IMR-90 (cell line): ENCODE measurements at regions of chr9 and their contacts with region 1.

Region 1: DNA sequence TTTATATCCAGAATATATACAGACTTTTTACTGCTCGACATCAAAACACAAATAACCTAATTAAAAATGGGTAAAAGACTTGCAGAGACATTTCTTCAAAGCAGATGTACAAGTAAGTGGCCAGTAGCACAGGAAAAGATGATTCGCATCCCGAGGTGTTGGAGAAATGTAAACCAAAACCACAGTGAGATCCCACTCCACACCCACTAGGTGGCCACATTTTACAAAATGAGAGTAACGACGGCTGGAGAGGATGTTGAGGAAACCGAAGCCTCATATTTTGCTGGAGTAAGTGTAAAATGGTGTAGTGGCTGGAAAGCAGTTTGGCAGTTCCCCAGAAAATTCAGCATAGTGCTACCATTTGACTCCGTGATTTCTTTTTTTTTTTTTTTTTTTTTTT is 21.2 kb upstream of the GBGT1 start:
- DNase-seq: peak; percentile 62
- ATAC-seq: peak; percentile 79
- H3K4me3 ChIP-seq: no peak overlapping the region
- H3K27ac ChIP-seq: no peak overlapping the region
- H3K4me1 ChIP-seq: no peaks in the 10 kb centered on the region
- H3K27me3 ChIP-seq: peaks cover 45% of the 10 kb centered on the region
- CTCF ChIP-seq: peak; percentile 61
- POLR2A ChIP-seq: no peak
- RAD21 ChIP-seq: peak; percentile 42

Region 2: DNA sequence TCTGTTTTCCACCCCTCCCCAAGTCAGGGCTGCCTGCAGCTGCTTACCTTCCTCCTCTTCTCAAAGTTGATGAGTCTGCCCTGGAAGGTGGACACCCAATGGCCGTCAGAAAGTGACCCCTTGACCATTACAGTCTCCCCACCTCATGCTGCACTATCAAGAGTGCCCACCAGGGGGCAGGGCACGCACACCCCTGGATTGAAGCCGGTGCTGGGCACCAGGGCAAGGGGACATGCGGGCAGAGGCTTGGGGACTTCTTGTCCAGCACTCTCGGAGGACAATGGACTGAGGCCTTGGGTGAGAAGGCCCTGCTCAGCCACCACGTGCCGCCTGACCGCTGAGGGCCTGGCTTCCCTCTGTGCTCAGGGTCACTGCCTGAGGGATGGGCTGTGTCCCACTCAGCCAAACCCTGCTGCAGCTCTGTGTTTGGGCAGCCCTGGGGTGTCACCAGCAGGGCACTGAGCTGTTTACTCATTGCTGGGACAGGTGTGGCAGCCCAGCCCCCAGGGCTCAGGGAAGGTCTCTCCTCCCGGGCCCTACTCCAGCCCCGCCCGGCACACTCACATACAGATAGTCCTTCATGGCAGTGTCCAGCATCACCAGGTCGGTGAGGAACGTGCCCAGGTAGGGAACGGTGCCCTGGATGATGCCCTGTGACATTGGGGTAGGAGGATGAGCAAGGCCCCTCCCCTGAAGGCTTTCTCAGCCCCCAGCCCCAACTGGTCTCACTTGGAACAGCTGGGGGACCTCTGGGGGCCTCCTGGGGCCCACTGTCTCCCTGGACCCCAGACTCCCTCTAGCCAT is 81.6 kb before region 1 on chr9:
- CTCF ChIA-PET with region 1: no interaction called
- POLR2A ChIA-PET with region 1: no interaction called
- dilution Hi-C with region 1: no loop called
- in situ Hi-C with region 1: no loop called
- intact Hi-C with region 1: loop called (anchors 2 kb)
- DNase-seq: peak; percentile 19
- ATAC-seq: peak; percentile 95
- H3K4me3 ChIP-seq: no peak overlapping the region
- H3K27ac ChIP-seq: no peak overlapping the region
- H3K4me1 ChIP-seq: no peaks in the 10 kb centered on the region
- H3K27me3 ChIP-seq: no peaks in the 10 kb centered on the region
- CTCF ChIP-seq: peak; percentile 88
- POLR2A ChIP-seq: peak; percentile 36; the same call in 1 of the 2 replicates
- RAD21 ChIP-seq: peak; percentile 94

Region 3: DNA sequence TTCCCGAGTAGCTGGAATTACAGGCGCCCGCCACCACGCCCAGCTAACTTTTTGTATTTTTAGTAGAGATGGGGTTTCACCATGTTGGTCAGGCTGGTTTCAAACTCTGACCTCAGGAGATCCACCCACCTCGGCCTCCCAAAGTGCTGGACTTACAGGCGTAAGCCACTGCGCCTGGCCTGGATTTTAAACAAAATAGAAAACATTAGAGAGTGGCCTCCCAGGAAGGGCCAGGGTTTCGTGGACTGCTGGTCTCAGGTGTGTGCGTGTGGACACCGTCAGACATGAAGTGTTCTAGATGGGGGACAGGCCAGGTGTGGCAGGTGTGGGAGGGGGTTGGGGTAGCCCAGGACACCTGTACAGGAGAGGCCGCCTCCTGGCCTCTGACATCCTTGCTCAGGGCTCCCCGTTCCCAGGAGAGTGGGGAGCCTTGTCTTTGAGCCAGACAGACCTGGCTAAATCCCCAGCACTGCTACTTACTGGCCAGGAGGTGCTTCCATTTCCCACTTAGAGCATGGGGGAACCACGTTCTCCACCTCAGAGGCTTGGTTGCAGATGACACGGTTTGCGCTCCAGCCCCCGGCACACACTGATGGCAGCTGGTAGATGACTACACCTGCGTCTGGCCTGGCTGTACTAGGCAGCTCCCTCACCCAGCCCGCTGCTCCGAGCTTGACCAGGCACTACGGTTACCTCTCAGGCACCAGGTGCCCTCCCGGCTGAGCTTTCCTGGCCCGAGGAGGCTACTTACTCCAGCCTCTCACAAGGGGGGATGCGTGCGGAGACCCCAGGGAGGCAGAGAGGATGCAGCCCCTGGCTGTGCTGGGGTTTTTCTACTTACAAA is 14.0 kb before region 1 on chr9:
- CTCF ChIA-PET with region 1: interaction called, 11 read pairs
- POLR2A ChIA-PET with region 1: no interaction called
- dilution Hi-C with region 1: no loop called
- in situ Hi-C with region 1: no loop called
- intact Hi-C with region 1: no loop called
- DNase-seq: no peak
- ATAC-seq: no peak
- H3K4me3 ChIP-seq: no peak overlapping the region
- H3K27ac ChIP-seq: no peak overlapping the region
- H3K4me1 ChIP-seq: no peaks in the 10 kb centered on the region
- H3K27me3 ChIP-seq: peaks cover 35% of the 10 kb centered on the region
- CTCF ChIP-seq: no peak
- POLR2A ChIP-seq: no peak
- RAD21 ChIP-seq: no peak

Region 4: GRCh38 chr9:133334161-133334560 is 149.2 kb after region 1 on chr9:
- CTCF ChIA-PET with region 1: no interaction called
- POLR2A ChIA-PET with region 1: no interaction called
- dilution Hi-C with region 1: no loop called
- in situ Hi-C with region 1: no loop called
- intact Hi-C with region 1: loop called (anchors 1 kb)
- DNase-seq: no peak
- ATAC-seq: no peak
- H3K4me3 ChIP-seq: no peak overlapping the region
- H3K27ac ChIP-seq: no peak overlapping the region
- H3K4me1 ChIP-seq: no peaks in the 10 kb centered on the region
- H3K27me3 ChIP-seq: no peaks in the 10 kb centered on the region
- CTCF ChIP-seq: no peak
- POLR2A ChIP-seq: no peak
- RAD21 ChIP-seq: no peak